Esophagus muscularis mucosa (tissue), 4 donors: ENCODE measurements at regions of chr13 and their contacts with region 1.

Region 1: DNA sequence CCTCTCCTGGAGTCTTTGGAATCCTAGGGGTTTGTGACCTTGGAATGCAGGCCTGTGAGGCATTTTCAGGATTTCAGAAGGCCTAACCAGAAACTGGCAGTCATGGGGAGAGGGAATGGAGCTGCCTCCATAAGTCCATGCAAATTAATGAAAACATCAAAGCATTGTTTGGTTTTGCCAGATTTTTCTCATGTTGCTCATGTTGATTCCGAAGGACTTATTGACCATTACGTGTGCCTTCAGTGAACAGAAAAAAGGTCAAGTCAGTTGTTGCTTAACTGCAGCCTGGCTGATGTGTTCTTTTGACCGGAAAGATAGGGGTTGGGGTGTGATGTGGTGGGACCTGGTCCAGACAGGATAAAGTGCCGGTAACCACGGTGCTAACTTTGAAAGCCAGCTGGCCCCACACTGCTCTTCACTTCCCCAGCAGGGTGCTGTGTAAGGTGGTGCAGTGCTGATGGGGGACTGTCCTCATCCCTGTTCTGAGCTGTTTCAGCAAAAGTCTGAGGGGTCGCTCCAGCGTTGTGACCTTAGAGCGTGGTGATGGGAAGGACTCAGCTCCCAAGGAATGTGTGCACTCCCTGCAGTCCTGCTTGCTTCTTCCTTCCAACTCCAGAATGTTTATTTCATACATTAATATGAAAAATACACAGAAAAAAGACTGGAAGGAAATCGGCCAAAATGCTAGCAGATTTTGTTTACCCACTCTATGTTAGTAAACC is 3.5 kb downstream of the RNF113B start:
- DNase-seq: no peak
- H3K4me3 ChIP-seq: no peak overlapping the region
- H3K27ac ChIP-seq: peak overlapping the region; percentile 34 to 72 (median 63)
- H3K4me1 ChIP-seq: peaks cover 36 to 43% (median 41%) of the 10 kb centered on the region in 4 donors
- H3K27me3 ChIP-seq: no peaks in the 10 kb centered on the region
- CTCF ChIP-seq: no peak
- EP300 ChIP-seq: no peak
- POLR2A ChIP-seq: no peak

Region 2: DNA sequence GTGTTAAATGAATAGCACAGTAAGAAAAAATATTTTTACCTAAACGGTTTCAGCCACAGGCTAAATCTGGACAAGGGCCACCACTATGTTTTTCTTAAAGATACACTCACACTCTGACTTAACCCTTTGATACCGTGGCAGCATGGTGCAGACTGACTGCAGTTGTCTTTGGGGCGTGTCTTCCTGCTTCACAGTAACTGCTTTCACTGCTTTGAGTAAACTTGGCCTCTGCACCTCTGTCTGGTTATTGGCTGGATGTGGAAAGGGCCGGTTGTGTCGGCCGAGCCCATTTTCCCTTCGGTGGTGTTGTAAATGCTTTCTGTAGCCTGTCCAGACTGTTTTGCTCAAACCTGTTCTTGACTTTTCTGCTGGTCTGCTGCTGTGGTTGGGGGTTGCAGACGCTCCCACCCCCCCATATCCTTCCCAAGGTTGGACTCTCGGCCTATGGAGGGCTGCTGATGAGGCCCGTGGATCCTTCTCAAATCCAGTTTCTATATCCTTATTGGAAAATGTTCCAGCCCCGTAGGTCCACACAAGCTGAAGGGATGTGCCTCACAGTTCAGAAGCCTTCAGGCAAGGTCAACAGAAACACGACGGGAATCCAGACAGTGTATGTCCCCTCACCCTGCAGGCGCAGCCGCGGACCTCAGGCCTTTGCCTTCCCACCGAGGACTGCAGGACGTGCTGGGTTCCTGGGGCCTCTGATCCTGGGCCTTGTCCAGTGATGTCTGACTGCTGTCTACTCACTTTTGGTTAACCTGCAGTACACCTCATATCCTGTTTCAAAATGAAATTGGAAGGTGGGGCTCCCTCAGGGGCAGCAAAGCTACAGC is 93.7 kb after region 1 on chr13:
- intact Hi-C with region 1: loop called (anchors 5 kb)
- DNase-seq: no peak
- H3K4me3 ChIP-seq: peak overlapping the region; percentile 2 to 40 (median 22)
- H3K27ac ChIP-seq: peak overlapping the region; percentile 12 to 44 (median 30)
- H3K4me1 ChIP-seq: peaks cover 3 to 23% (median 21%) of the 10 kb centered on the region in 4 donors
- H3K27me3 ChIP-seq: no peaks in the 10 kb centered on the region
- CTCF ChIP-seq: no peak
- EP300 ChIP-seq: no peak
- POLR2A ChIP-seq: no peak